ENCODE measurements at regions of chr9 and their contacts with region 1.

Region 1: GRCh38 chr9:96854073-96854876 is at the start of gene ZNF782:
- DNase-seq: peak; percentile 93 to 95
- H3K4me3 ChIP-seq: peak within 1 kb of the TSS; percentile 77 to 81
- H3K27ac ChIP-seq: peak within 1 kb of the TSS; percentile 76 to 83
- H3K4me1 ChIP-seq: peaks cover 0 to 30% (median 17%) of the 10 kb centered on the region in 4 donors
- H3K27me3 ChIP-seq: no peaks in the 10 kb centered on the region
- CTCF ChIP-seq: no peak

Region 2: GRCh38 chr9:96661711-96662110 is 192.6 kb before region 1 on chr9:
- intact Hi-C with region 1: no loop called
- DNase-seq: no peak
- H3K4me3 ChIP-seq: no peak overlapping the region
- H3K27ac ChIP-seq: no peak overlapping the region
- H3K4me1 ChIP-seq: no peaks in the 10 kb centered on the region
- H3K27me3 ChIP-seq: no peaks in the 10 kb centered on the region
- CTCF ChIP-seq: no peak

Region 3: GRCh38 chr9:97398999-97399758 is 544.9 kb after region 1 on chr9:
- intact Hi-C with region 1: loop called (anchors 5 kb)
- DNase-seq: peak in 1 of 2 donors; percentile 35
- H3K4me3 ChIP-seq: no peak overlapping the region
- H3K27ac ChIP-seq: no peak overlapping the region
- H3K4me1 ChIP-seq: no peaks in the 10 kb centered on the region
- H3K27me3 ChIP-seq: no peaks in the 10 kb centered on the region
- CTCF ChIP-seq: peak; percentile 65 to 85

Region 4: DNA sequence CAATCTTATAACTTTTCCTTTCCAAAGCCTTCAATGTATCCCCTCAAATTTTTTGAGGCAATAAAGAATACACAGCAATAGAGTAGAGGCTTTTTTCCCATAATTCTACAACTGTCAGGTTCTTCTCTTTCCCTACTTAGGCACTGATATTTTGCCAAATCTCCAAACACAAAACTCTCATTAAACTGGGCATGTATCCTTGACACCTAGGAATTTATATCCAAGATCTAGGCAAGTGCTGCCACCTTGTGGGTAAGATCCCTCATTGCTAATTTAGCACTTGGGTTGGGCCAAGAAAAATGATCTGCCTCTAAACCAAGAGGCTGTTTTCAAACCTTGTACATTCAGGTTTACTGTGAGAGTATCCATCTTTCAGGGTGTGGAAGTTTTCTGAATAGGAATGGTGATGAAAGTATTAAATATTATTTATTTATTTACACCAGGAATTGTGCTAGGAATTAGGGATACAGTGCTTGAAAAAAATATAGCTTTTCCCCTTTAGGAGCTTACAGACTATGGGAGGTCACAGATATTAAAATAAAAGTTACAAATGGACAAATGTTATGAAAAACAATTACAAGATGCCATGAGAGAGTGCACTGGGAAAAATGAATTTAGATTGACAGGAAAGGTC is 761.3 kb after region 1 on chr9:
- intact Hi-C with region 1: loop called (anchors 10 kb)
- DNase-seq: peak in 1 of 2 donors; percentile 69
- H3K4me3 ChIP-seq: no peak overlapping the region
- H3K27ac ChIP-seq: peak overlapping the region in 1 of 2 donors; percentile 16
- H3K4me1 ChIP-seq: peaks cover 0 to 7% (median 1%) of the 10 kb centered on the region in 4 donors
- H3K27me3 ChIP-seq: no peaks in the 10 kb centered on the region
- CTCF ChIP-seq: peak; percentile 79 to 85